ENCODE measurements at regions of chr1 and their contacts with region 1.

Region 1: DNA sequence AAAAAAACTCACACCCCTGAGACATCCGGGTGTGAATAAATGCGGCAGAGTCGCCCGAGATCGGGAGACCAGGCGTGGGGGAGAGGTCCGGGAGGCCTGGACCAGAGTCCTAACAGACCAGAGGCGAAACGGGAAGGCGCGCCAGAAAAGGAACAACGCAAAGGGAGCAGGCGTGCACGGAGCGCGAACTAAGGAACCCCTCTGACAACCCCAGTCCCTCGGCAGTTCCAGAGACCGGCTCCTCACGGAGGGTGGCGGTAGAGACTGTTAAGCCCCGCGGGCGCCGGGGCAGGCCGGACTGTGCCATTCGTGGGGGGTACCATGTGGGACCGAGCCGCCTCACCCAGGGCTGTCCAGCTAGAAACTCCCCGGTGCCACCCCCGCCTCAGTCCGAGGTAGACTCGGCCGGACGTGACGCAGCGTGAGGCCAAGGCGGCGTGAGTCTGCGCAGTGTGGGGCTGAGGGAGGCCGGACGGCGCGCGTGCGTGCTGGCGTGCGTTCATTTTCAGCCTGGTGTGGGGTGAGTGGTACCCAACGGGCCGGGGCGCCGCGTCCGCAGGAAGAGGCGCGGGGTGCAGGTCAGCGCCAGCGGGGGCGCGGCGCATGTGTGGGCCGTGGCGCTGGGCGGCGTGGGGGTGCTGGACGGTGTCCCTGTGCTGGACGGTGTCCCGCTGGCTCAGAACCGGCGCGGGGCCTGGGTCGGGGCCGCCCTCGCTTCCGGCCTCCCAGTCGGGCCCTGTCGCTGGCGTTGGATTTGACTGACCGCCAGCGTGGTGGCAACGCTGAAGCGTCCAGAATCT is at the start of gene PARK7:
- DNase-seq: peak; percentile 100
- H3K4me3 Mint-ChIP-seq: peak within 1 kb of the TSS; percentile 93
- H3K27ac Mint-ChIP-seq: peak within 1 kb of the TSS; percentile 94
- H3K4me1 Mint-ChIP-seq: peaks cover 54% of the 10 kb centered on the region
- H3K27me3 Mint-ChIP-seq: no peaks in the 10 kb centered on the region
- total RNA-seq, gene PARK7: 429 to 457 TPM

Region 2: DNA sequence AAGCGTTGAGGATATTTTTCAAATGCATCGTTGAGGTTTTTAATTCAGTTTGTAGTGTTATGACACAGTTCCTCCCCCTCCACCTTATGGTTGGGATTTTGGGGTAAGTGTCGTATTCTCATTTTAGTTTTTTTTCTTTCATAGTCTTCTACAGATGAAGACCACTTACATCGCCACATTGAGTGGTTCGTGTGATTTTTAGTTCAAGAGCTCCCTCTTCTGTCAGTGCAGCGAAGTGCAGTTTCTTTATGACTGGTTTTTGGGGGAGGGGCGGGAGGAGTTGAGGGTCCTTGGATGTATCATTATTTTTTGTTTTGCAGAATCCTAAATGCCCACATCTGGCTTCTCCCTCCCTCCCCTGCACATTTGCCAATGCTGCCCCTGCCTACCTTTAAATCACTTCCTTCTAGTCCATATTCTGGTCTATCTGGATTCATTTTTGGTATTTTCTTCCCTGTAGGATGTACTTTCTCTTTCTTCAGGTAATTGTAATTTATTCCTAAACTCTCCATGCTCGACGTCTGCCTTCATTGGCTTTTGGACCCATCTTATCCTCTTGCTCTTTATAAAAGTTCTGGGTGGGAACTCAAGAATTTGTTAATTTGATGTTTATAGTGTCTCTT is 743.1 kb before region 1 on chr1:
- CTCF ChIA-PET with region 1: no interaction called
- POLR2A ChIA-PET with region 1: no interaction called
- intact Hi-C with region 1: no loop called
- DNase-seq: peak; percentile 43
- H3K4me3 Mint-ChIP-seq: no peak overlapping the region
- H3K27ac Mint-ChIP-seq: no peak overlapping the region
- H3K4me1 Mint-ChIP-seq: no peaks in the 10 kb centered on the region
- H3K27me3 Mint-ChIP-seq: peaks cover 21% of the 10 kb centered on the region

Region 3: DNA sequence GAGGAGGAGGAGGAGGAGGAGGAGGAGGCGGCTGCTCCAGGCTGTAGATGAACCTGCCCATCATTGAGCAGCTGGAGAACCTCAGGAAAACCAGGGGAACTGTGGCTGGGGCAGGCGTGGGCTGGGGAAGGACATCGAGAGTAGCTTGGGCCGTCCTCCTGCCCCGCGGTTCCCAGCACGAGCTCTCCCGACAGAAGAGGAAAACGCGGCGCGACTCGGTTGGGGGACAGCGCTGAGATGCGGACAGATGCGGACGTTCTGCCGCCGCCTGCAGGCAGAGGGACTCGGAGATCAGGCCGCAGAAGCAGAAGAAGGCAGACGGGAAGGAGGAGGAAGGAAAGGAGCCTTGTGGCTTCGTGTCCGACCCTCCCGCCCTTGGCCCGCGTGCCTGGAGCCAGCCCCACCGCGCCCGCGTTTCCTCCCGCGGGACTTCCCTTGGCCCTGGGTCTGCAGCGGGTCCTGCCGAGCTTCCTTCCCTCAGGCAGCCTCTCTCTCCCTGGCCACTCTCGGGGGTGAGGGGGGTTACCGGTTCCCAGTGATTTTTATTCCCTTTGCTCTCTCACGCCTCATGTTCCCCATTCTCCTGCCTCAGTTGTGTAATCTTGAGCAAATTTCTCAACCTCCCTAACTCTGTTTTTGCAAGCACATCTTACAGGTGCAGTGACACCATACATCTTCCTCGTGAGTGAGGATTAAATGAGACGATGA is 19.0 kb before region 1 on chr1:
- CTCF ChIA-PET with region 1: interaction called, 4 read pairs
- POLR2A ChIA-PET with region 1: interaction called, 30 read pairs
- intact Hi-C with region 1: no loop called
- DNase-seq: peak; percentile 58
- H3K4me3 Mint-ChIP-seq: peak overlapping the region; percentile 44
- H3K27ac Mint-ChIP-seq: peak overlapping the region; percentile 80
- H3K4me1 Mint-ChIP-seq: peaks cover 46% of the 10 kb centered on the region
- H3K27me3 Mint-ChIP-seq: peaks cover 9% of the 10 kb centered on the region

Region 4: DNA sequence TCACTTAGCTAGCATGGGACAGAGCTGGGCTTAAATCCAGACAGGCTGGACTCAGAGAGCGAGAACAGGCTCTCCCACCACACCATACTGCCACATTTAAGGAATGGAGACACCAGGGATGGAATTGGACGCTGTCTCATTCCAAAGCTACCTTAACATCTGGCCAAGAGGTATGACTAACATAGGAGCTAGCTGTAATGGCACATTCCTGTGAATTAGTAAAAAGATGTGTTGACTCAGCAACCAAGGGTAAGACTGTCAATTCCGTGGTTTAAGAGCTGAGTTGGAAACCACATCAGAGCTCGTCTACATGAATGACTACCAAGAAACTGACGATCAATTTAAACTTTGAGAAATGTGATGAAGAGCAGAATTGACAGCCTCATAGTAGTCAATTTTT is 12.5 kb before region 1 on chr1:
- CTCF ChIA-PET with region 1: interaction called, 4 read pairs
- POLR2A ChIA-PET with region 1: interaction called, 30 read pairs
- intact Hi-C with region 1: no loop called
- DNase-seq: peak; percentile 44
- H3K4me3 Mint-ChIP-seq: peak overlapping the region; percentile 27
- H3K27ac Mint-ChIP-seq: peak overlapping the region; percentile 84
- H3K4me1 Mint-ChIP-seq: peaks cover 29% of the 10 kb centered on the region
- H3K27me3 Mint-ChIP-seq: no peaks in the 10 kb centered on the region

Measured in activated CD4-positive, alpha-beta memory T cell treated with anti-CD3 and anti-CD28 coated beads for 36 hours (primary cell).